Transverse colon (tissue), 4 donors: ENCODE measurements at regions of chrX and their contacts with region 1.

Region 1: GRCh38 chrX:37825209-37825842 is 22.0 kb downstream of the DYNLT3 start:
- DNase-seq: peak; percentile 58
- H3K4me3 ChIP-seq: no peak overlapping the region
- H3K27ac ChIP-seq: no peak overlapping the region
- H3K4me1 ChIP-seq: peaks cover 0 to 8% (median 2%) of the 10 kb centered on the region in 4 donors
- H3K27me3 ChIP-seq: no peaks in the 10 kb centered on the region
- CTCF ChIP-seq: peak; percentile 75 to 90 (median 89)
- EP300 ChIP-seq: no peak
- POLR2A ChIP-seq: no peak

Region 2: GRCh38 chrX:37509349-37509748 is 316.0 kb before region 1 on chrX:
- in situ Hi-C with region 1: no loop called
- intact Hi-C with region 1: loop called (anchors 10 kb)
- DNase-seq: no peak
- H3K4me3 ChIP-seq: no peak overlapping the region
- H3K27ac ChIP-seq: no peak overlapping the region
- H3K4me1 ChIP-seq: no peaks in the 10 kb centered on the region
- H3K27me3 ChIP-seq: no peaks in the 10 kb centered on the region
- CTCF ChIP-seq: peak in 3 of 5 experiments; percentile 20 to 38 (median 29)
- EP300 ChIP-seq: no peak
- POLR2A ChIP-seq: no peak

Region 3: GRCh38 chrX:37765507-37765906 is 59.8 kb before region 1 on chrX:
- in situ Hi-C with region 1: no loop called
- intact Hi-C with region 1: loop called (anchors 10 kb)
- DNase-seq: no peak
- H3K4me3 ChIP-seq: no peak overlapping the region
- H3K27ac ChIP-seq: no peak overlapping the region
- H3K4me1 ChIP-seq: no peaks in the 10 kb centered on the region
- H3K27me3 ChIP-seq: no peaks in the 10 kb centered on the region
- CTCF ChIP-seq: no peak
- EP300 ChIP-seq: no peak
- POLR2A ChIP-seq: no peak

Region 4: DNA sequence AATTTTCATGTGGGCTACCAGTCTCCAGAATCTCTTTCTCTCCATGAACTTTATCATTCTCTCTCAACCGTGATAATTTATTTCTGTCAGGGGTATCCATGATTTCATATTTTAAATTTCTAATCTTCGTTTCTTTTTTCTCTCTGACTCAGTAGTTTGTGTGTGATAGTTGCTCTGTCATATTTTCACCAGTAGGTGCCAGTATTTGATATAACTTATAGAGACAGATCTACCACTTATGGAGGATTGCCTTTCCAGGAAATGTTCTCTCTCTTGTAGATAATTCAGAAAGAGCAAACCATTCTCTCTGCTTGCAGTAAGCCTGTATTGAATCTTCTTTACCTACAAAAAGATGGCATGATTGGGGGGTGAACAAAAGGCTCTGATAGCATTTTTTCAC is 101.4 kb after region 1 on chrX:
- in situ Hi-C with region 1: no loop called
- intact Hi-C with region 1: no loop called
- DNase-seq: no peak
- H3K4me3 ChIP-seq: no peak overlapping the region
- H3K27ac ChIP-seq: no peak overlapping the region
- H3K4me1 ChIP-seq: no peaks in the 10 kb centered on the region
- H3K27me3 ChIP-seq: no peaks in the 10 kb centered on the region
- CTCF ChIP-seq: peak; percentile 40 to 66 (median 47)
- EP300 ChIP-seq: no peak
- POLR2A ChIP-seq: no peak